CD4-positive, alpha-beta T cell (primary cell): ENCODE measurements at regions of chr1 and their contacts with region 1.

Region 1: GRCh38 chr1:214602764-214603657 is at the start of gene CENPF:
- DNase-seq: peak; percentile 84 to 98 (median 90)
- ATAC-seq: peak; percentile 98
- H3K4me3 ChIP-seq: peak within 1 kb of the TSS; percentile 67
- H3K4me3 Mint-ChIP-seq: peak within 1 kb of the TSS; percentile 93
- H3K27ac ChIP-seq: no peak within 1 kb of the TSS
- H3K27ac Mint-ChIP-seq: peak within 1 kb of the TSS; percentile 45
- H3K4me1 ChIP-seq: peaks cover 12% of the 10 kb centered on the region
- H3K4me1 Mint-ChIP-seq: peaks cover 23% of the 10 kb centered on the region
- H3K27me3 ChIP-seq: no peaks in the 10 kb centered on the region
- H3K27me3 Mint-ChIP-seq: no peaks in the 10 kb centered on the region
- CTCF ChIP-seq: peak; percentile 39
- total RNA-seq, gene CENPF: 3.4 to 3.8 TPM

Region 2: DNA sequence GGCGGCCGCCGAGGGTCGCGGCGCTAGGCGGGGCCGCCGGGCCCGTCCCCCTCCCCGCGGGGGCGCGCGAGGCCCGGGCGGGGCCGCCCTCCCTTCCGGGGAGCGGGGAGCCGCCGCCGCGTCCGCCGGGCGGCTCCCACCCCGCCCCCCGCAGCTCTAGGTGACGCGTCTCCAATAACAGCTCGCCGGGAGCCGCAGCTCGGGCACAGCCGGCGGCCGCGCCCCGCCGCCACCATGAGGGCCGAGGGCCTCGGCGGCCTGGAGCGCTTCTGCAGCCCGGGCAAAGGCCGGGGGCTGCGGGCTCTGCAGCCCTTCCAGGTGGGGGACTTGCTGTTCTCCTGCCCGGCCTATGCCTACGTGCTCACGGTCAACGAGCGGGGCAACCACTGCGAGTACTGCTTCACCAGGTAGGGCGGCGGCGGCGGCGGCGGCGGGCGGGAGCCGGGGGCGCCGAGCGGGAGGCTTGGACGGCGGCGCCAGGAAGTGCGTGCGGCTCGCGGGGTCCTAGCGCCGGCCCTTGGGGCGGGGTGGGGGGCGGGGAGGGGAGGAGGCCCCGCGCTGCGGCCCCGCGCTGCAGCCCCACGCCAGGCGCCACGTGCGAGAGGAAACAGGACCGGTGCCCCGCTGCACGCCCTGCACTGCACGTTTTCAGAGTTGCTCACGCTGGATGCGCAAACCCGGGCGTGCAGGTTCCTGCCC is 321.8 kb before region 1 on chr1 and contains the start of gene SMYD2:
- CTCF ChIA-PET with region 1: no interaction called
- POLR2A ChIA-PET with region 1: no interaction called
- intact Hi-C with region 1: loop called in 1 of 2 experiments (anchors 2 kb)
- DNase-seq: peak; percentile 48 to 87 (median 68)
- ATAC-seq: peak; percentile 78
- H3K4me3 ChIP-seq: peak within 1 kb of the TSS; percentile 89
- H3K4me3 Mint-ChIP-seq: peak within 1 kb of the TSS; percentile 93
- H3K27ac ChIP-seq: peak within 1 kb of the TSS; percentile 37 to 65
- H3K27ac Mint-ChIP-seq: peak within 1 kb of the TSS; percentile 84
- H3K4me1 ChIP-seq: peaks cover 21% of the 10 kb centered on the region
- H3K4me1 Mint-ChIP-seq: peaks cover 50% of the 10 kb centered on the region
- H3K27me3 ChIP-seq: no peaks in the 10 kb centered on the region
- H3K27me3 Mint-ChIP-seq: no peaks in the 10 kb centered on the region
- CTCF ChIP-seq: no peak
- total RNA-seq, gene SMYD2: 17.1 to 17.6 TPM

Region 3: GRCh38 chr1:214688891-214689290 is 85.9 kb after region 1 on chr1:
- CTCF ChIA-PET with region 1: no interaction called
- POLR2A ChIA-PET with region 1: no interaction called
- intact Hi-C with region 1: no loop called
- DNase-seq: no peak
- ATAC-seq: no peak
- H3K4me3 ChIP-seq: no peak overlapping the region
- H3K4me3 Mint-ChIP-seq: no peak overlapping the region
- H3K27ac ChIP-seq: no peak overlapping the region
- H3K27ac Mint-ChIP-seq: no peak overlapping the region
- H3K4me1 ChIP-seq: no peaks in the 10 kb centered on the region
- H3K4me1 Mint-ChIP-seq: no peaks in the 10 kb centered on the region
- H3K27me3 ChIP-seq: no peaks in the 10 kb centered on the region
- H3K27me3 Mint-ChIP-seq: peaks cover 4% of the 10 kb centered on the region
- CTCF ChIP-seq: no peak